Dorsolateral prefrontal cortex (tissue), 120 donors: ENCODE measurements at regions of chr11 and their contacts with region 1.

Region 1: DNA sequence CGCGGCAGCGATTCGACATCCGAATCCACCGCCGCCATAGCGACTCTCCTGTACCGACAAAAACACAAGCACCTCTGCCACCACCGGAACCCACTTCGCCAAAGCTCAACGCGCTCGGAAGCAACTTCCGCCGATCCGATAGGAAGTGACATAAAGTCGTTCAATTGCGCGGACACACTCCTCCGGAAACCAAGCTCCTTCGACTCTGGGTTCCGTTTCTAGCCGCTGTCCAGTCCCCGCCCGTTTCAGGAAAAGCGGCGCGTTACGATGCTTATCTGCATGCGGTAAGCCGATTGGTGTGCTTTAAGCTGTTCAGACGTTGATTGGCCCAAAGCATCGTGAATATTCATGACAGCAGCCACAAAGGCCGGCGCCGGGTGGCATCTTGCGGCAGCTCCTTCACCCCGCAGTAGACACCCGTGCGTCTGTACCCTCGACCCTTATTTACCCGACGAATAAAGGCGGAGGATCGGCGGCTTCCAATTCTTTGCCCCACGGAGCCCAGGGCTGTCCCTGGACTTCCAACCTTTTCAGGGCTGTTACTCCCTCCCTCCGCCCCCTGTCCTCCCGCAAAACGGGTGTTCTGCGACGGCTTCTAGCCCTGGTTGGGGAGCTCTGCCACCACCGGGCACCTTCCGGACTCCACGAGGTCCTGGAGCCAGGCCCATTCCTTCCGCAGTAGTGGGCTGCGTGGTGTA is at the start of gene TUT1:
- DNase-seq: peak; percentile 89 to 99 (median 98)
- H3K4me3 ChIP-seq: peak within 1 kb of the TSS; percentile 53 to 100 (median 88)
- H3K27ac ChIP-seq: peak within 1 kb of the TSS; percentile 83 to 99 (median 97)
- H3K27me3 ChIP-seq: no peaks in the 10 kb centered on the region
- CTCF ChIP-seq: peak in 41 of 56 donors; percentile 11 to 63 (median 35)
- total RNA-seq, gene TUT1: 11.6 to 30.9 (median 19.4) TPM

Region 2: DNA sequence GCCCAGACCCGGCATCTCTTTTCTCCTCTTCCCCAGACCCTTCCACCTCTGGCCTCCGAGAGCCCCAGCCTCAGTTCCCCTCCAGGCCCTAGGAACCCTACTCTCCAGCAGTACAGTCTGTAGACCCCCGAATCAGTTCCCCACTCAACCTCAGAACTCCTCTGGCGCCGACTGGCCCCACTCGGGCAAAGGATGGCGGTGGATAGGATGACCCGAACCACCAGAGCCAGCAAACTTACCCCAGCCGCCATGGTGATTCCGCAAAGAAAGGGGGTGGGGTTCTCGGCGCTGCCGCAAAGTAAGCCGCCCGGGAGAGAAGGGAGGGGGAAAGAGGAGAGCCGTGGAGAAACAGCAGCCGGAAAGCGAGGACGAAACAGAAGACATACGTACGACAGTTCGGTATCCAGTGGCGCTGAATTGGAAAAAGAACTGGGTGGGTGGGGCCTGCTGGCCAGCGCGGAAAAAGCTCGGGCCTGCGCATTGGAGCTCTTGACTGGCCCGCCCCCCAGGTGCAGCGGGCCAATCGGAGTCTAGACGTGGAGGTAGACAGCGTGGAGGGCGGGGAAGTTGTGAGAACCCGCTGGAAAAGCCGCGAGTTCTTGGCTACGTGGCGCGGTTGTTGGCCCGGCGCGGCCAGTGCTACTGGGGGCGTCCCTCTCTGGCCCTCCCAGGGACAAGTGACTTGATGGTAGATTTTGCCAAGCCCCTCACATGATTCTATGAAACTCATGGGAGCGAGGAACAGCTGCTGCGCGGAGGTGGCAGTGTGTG is 17.8 kb before region 1 on chr11 and contains the start of gene EEF1G:
- intact Hi-C with region 1: loop called (anchors 2 kb)
- DNase-seq: peak; percentile 96 to 99 (median 98)
- H3K4me3 ChIP-seq: peak within 1 kb of the TSS; percentile 55 to 95 (median 84)
- H3K27ac ChIP-seq: peak within 1 kb of the TSS; percentile 91 to 100 (median 99)
- H3K27me3 ChIP-seq: no peaks in the 10 kb centered on the region
- CTCF ChIP-seq: peak in 36 of 56 donors; percentile 5 to 65 (median 30)
- total RNA-seq, gene EEF1G: 260 to 479 (median 336) TPM

Region 3: GRCh38 chr11:62621567-62622470 is 30.2 kb after region 1 on chr11 and contains the start of gene B3GAT3:
- intact Hi-C with region 1: loop called in 1 of 2 experiments (anchors 1 kb)
- DNase-seq: peak; percentile 96 to 99 (median 98)
- H3K4me3 ChIP-seq: peak within 1 kb of the TSS; percentile 59 to 96 (median 82)
- H3K27ac ChIP-seq: peak within 1 kb of the TSS; percentile 53 to 97 (median 90)
- H3K27me3 ChIP-seq: no peaks in the 10 kb centered on the region
- CTCF ChIP-seq: peak in 39 of 56 donors; percentile 3 to 66 (median 35)
- total RNA-seq, gene B3GAT3: 52.5 to 99.7 (median 70.4) TPM

Region 4: GRCh38 chr11:62705880-62706849 is 114.6 kb after region 1 on chr11:
- intact Hi-C with region 1: loop called in 1 of 2 experiments (anchors 5 kb)
- DNase-seq: peak; percentile 91 to 98 (median 96)
- H3K4me3 ChIP-seq: peak overlapping the region; percentile 54 to 99 (median 82)
- H3K27ac ChIP-seq: peak overlapping the region; percentile 72 to 100 (median 96)
- H3K27me3 ChIP-seq: no peaks in the 10 kb centered on the region
- CTCF ChIP-seq: peak in 15 of 56 donors; percentile 3 to 32 (median 22)

Region 5: DNA sequence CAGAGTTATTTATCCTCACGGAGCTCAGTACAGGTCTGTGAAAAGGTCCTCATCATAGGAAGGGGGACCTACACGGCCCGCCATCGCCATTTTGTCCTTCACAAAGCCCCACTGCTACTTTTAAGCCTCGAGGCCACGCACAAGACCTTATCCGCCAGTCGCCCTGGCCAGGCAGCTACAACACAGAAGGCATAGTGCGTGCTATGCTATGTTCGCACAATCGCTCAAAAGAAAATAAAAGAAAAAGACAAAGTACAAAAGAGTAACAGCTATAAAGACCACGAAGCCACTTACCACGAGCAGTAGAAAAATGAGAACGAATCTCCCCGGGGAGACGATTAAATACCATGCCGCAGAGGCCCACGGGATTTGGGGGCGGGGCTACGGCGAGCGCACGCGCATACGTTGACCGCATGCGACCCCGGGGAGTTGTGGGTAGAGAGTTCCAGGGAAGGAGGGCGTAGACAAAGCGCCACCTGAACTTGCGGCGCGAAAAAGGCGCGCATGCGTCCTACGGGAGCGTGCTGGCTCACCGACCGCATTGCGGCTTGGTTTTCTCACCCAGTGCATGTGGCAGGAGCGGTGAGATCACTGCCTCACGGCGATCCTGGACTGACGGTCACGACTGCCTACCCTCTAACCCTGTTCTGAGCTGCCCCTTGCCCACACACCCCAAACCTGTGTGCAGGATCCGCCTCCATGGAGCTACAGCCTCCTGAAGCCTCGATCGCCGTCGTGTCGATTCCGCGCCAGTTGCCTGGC is 264.2 kb after region 1 on chr11:
- intact Hi-C with region 1: loop called in 1 of 2 experiments (anchors 10 kb)
- DNase-seq: peak; percentile 91 to 97 (median 94)
- H3K4me3 ChIP-seq: peak overlapping the region; percentile 64 to 100 (median 90)
- H3K27ac ChIP-seq: peak overlapping the region; percentile 31 to 94 (median 82)
- H3K27me3 ChIP-seq: no peaks in the 10 kb centered on the region
- CTCF ChIP-seq: peak in 47 of 56 donors; percentile 15 to 65 (median 40)

Region 6: GRCh38 chr11:63768237-63769043 is 1176.8 kb after region 1 on chr11 and contains the start of gene ZFTA:
- intact Hi-C with region 1: loop called in 1 of 2 experiments (anchors 10 kb)
- DNase-seq: peak in 5 of 10 donors; percentile 52 to 76 (median 59)
- H3K4me3 ChIP-seq: peak within 1 kb of the TSS; percentile 62 to 87 (median 78)
- H3K27ac ChIP-seq: peak within 1 kb of the TSS in 55 of 59 donors; percentile 29 to 89 (median 80)
- H3K27me3 ChIP-seq: no peaks in the 10 kb centered on the region
- CTCF ChIP-seq: peak in 41 of 56 donors; percentile 0 to 92 (median 64)
- total RNA-seq, gene ZFTA: 8.7 to 41.2 (median 25.3) TPM